ENCODE measurements at regions of chr5 and their contacts with region 1.

Region 1: DNA sequence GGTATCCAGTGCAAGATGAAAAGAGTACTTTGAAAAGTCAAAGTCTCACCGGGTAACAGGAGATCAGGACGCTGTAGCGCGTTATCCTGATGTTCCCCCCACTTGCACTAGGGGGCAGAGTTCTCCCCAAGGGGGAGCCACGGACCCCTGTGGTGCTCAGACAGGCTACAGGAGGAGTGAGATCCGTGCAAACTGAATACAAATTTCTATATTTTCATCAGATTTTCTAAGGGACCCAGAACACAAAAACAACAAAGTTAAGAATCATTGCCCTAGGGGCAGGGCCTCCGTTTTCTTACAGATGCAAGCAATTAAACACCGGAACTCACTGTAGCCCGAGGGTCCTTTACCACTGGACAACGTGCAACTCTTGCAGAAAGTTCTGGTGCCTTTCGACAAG is 2.0 kb downstream of the MYO10 start:
- DNase-seq: peak; percentile 42
- H3K4me3 ChIP-seq: peak overlapping the region; percentile 76
- H3K27ac ChIP-seq: no peak overlapping the region
- H3K4me1 ChIP-seq: peaks cover 36% of the 10 kb centered on the region
- H3K27me3 ChIP-seq: peaks cover 89% of the 10 kb centered on the region
- CTCF ChIP-seq: peak; percentile 82

Region 2: GRCh38 chr5:17132444-17133083 is 198.4 kb after region 1 on chr5:
- intact Hi-C with region 1: loop called (anchors 10 kb)
- DNase-seq: no peak
- H3K4me3 ChIP-seq: no peak overlapping the region
- H3K27ac ChIP-seq: no peak overlapping the region
- H3K4me1 ChIP-seq: no peaks in the 10 kb centered on the region
- H3K27me3 ChIP-seq: peaks cover 8% of the 10 kb centered on the region
- CTCF ChIP-seq: peak; percentile 80

Measured in left ventricle myocardium inferior (tissue), 1 donor.